ENCODE measurements at regions of chr6 and their contacts with region 1.

Region 1: GRCh38 chr6:158869826-158870648 is 50.9 kb upstream of the EZR start:
- DNase-seq: peak in 3 of 5 donors; percentile 93 to 98 (median 96)
- H3K4me3 ChIP-seq: peak overlapping the region; percentile 55 to 61
- H3K4me3 Mint-ChIP-seq: peak overlapping the region; percentile 89 to 96 (median 92)
- H3K27ac ChIP-seq: peak overlapping the region; percentile 97
- H3K27ac Mint-ChIP-seq: peak overlapping the region; percentile 98 to 100 (median 100)
- H3K4me1 ChIP-seq: peaks cover 20% of the 10 kb centered on the region
- H3K4me1 Mint-ChIP-seq: peaks cover 12 to 39% (median 22%) of the 10 kb centered on the region in 4 donors
- H3K27me3 ChIP-seq: no peaks in the 10 kb centered on the region
- H3K27me3 Mint-ChIP-seq: no peaks in the 10 kb centered on the region

Region 2: GRCh38 chr6:158784505-158784904 is 85.5 kb before region 1 on chr6:
- CTCF ChIA-PET with region 1: interaction called, 17 read pairs
- POLR2A ChIA-PET with region 1: interaction called, 27 read pairs
- intact Hi-C with region 1: no loop called
- DNase-seq: no peak
- H3K4me3 ChIP-seq: no peak overlapping the region
- H3K4me3 Mint-ChIP-seq: no peak overlapping the region
- H3K27ac ChIP-seq: no peak overlapping the region
- H3K27ac Mint-ChIP-seq: peak overlapping the region in 6 of 7 donors; percentile 25 to 82 (median 50)
- H3K4me1 ChIP-seq: peaks cover 27% of the 10 kb centered on the region
- H3K4me1 Mint-ChIP-seq: peaks cover 16 to 57% (median 30%) of the 10 kb centered on the region in 4 donors
- H3K27me3 ChIP-seq: no peaks in the 10 kb centered on the region
- H3K27me3 Mint-ChIP-seq: no peaks in the 10 kb centered on the region

Region 3: DNA sequence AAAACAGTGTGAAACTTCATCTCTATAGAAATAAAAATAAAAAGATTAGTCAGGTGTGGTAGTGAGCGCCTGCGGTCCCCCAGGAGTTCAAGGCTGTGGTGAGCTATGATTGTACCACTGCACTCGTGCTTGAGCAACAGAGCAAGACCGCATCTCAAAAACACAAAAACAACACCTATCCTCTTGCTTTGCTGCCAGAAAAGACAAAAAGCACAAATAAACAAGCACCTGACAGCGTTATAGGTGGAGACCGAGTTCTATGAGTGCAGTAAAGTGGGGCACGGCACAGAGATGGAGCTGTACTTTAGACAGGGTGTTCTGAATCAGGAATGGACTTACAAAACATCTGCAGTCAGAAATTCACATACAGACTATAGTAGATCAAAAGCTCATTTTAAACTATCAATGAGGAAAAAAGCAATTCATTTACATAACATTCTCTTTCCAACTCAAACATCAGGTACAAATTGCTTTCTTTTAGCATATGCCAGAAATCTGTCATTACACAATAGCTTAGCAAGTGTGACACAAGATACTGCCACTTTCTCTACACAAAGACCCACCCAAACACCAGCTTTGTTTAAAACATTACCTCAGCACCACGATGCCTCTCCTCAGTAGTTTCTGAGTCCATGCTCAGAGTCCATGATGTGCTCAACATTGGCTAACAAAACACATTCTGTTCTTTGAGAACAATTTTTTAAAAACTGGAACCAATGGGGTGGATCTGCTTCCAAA is 60.9 kb before region 1 on chr6:
- CTCF ChIA-PET with region 1: interaction called, 7 read pairs
- POLR2A ChIA-PET with region 1: interaction called, 93 read pairs
- intact Hi-C with region 1: no loop called
- DNase-seq: peak; percentile 56 to 72 (median 71)
- H3K4me3 ChIP-seq: peak overlapping the region in 1 of 2 donors; percentile 10
- H3K4me3 Mint-ChIP-seq: peak overlapping the region; percentile 45 to 80 (median 64)
- H3K27ac ChIP-seq: peak overlapping the region; percentile 3
- H3K27ac Mint-ChIP-seq: peak overlapping the region; percentile 81 to 96 (median 88)
- H3K4me1 ChIP-seq: peaks cover 100% of the 10 kb centered on the region
- H3K4me1 Mint-ChIP-seq: peaks cover 86 to 99% (median 92%) of the 10 kb centered on the region in 4 donors
- H3K27me3 ChIP-seq: no peaks in the 10 kb centered on the region
- H3K27me3 Mint-ChIP-seq: no peaks in the 10 kb centered on the region

Region 4: GRCh38 chr6:158831197-158831970 is 38.7 kb before region 1 on chr6:
- CTCF ChIA-PET with region 1: interaction called, 3 read pairs
- POLR2A ChIA-PET with region 1: interaction called, 13 read pairs
- intact Hi-C with region 1: no loop called
- DNase-seq: no peak
- H3K4me3 ChIP-seq: no peak overlapping the region
- H3K4me3 Mint-ChIP-seq: no peak overlapping the region
- H3K27ac ChIP-seq: no peak overlapping the region
- H3K27ac Mint-ChIP-seq: peak overlapping the region in 1 of 7 donors; percentile 53
- H3K4me1 ChIP-seq: no peaks in the 10 kb centered on the region
- H3K4me1 Mint-ChIP-seq: no peaks in the 10 kb centered on the region
- H3K27me3 ChIP-seq: no peaks in the 10 kb centered on the region
- H3K27me3 Mint-ChIP-seq: no peaks in the 10 kb centered on the region

Region 5: GRCh38 chr6:158910484-158911348 is 40.7 kb after region 1 on chr6:
- CTCF ChIA-PET with region 1: interaction called, 4 read pairs
- POLR2A ChIA-PET with region 1: interaction called, 44 read pairs
- intact Hi-C with region 1: no loop called
- DNase-seq: peak in 2 of 5 donors; percentile 10 to 21
- H3K4me3 ChIP-seq: peak overlapping the region in 1 of 2 donors; percentile 21
- H3K4me3 Mint-ChIP-seq: peak overlapping the region; percentile 35 to 91 (median 66)
- H3K27ac ChIP-seq: no peak overlapping the region
- H3K27ac Mint-ChIP-seq: peak overlapping the region in 6 of 7 donors; percentile 23 to 83 (median 62)
- H3K4me1 ChIP-seq: peaks cover 33% of the 10 kb centered on the region
- H3K4me1 Mint-ChIP-seq: peaks cover 21 to 55% (median 31%) of the 10 kb centered on the region in 4 donors
- H3K27me3 ChIP-seq: no peaks in the 10 kb centered on the region
- H3K27me3 Mint-ChIP-seq: peaks cover 0 to 1% of the 10 kb centered on the region in 2 donors

Region 6: DNA sequence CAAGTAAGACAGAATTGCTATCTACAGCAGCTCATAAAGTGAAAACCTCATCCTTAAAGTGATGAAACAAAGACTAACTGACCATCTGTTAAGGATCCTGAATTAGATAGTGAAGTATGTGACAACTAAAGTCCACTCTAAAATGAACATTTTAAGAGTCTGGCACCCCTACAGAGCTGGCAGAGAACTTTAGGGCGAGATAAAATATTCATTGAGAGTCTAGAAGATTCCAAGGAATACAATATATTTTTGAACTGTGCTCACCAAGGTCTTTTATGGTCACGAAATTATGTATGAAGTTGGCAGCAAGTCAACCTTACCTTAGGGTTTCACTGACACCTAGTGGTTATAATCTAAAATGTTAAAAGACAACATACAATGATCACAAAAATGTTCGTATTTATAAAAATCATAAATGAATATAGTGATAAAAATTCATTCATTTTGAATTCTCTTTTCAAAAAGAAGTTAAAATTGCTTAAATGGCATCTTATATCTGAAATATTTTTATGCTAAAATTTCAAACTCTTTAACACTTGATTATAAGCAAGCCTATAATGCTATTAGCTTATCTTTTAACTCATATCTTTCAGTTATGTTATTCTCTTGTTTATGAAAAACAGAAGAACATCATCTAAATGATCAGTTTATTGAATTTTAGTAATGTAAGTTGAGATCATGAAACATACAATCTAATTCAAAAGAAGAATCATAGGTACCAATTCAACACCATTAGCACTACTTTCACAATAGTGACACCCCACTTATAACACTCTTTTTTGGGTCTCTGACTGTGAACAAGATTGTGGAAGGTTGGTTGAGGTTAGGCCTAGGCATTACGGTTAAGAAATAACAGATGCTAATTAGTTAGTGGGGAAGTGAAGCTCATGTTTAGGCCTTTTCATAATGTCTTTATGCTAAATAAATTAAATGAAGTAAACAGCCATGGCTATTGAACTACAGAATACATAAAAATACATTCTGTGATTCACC is 102.5 kb after region 1 on chr6:
- CTCF ChIA-PET with region 1: interaction called, 10 read pairs
- POLR2A ChIA-PET with region 1: interaction called, 4 read pairs
- intact Hi-C with region 1: no loop called
- DNase-seq: peak in 4 of 5 donors; percentile 57 to 66 (median 60)
- H3K4me3 ChIP-seq: no peak overlapping the region
- H3K4me3 Mint-ChIP-seq: no peak overlapping the region
- H3K27ac ChIP-seq: no peak overlapping the region
- H3K27ac Mint-ChIP-seq: peak overlapping the region in 2 of 7 donors; percentile 31 to 47
- H3K4me1 ChIP-seq: no peaks in the 10 kb centered on the region
- H3K4me1 Mint-ChIP-seq: peaks cover 0 to 3% (median 0%) of the 10 kb centered on the region in 4 donors
- H3K27me3 ChIP-seq: no peaks in the 10 kb centered on the region
- H3K27me3 Mint-ChIP-seq: no peaks in the 10 kb centered on the region

Measured in CD4-positive, alpha-beta memory T cell (primary cell).